Posterior cingulate gyrus (tissue), 11 donors: ENCODE measurements at regions of chr3 and their contacts with region 1.

Region 1: GRCh38 chr3:107235928-107236315 is 141.3 kb upstream of the CCDC54 start:
- DNase-seq: peak in 3 of 10 donors; percentile 40 to 61 (median 49)

Region 2: DNA sequence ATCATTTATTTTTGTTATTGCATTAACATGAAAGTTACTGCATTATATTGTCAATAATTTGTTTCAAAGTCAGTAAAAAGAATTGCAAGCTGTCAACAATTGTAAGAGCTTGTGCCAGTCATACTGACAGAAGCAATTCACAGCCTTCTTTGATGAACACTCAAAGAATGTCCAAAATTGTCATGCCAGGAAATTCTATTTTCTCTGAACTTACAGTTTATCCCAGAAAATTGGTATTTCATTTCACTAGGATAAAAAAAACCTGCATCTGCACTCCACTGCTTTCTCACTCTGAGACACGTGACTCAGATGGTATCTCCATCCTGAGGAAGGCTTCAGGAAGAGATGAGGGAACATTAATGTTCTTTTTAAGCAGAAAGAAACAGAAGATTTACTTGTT is 191.2 kb before region 1 on chr3:
- intact Hi-C with region 1: no loop called
- DNase-seq: no peak

Region 3: DNA sequence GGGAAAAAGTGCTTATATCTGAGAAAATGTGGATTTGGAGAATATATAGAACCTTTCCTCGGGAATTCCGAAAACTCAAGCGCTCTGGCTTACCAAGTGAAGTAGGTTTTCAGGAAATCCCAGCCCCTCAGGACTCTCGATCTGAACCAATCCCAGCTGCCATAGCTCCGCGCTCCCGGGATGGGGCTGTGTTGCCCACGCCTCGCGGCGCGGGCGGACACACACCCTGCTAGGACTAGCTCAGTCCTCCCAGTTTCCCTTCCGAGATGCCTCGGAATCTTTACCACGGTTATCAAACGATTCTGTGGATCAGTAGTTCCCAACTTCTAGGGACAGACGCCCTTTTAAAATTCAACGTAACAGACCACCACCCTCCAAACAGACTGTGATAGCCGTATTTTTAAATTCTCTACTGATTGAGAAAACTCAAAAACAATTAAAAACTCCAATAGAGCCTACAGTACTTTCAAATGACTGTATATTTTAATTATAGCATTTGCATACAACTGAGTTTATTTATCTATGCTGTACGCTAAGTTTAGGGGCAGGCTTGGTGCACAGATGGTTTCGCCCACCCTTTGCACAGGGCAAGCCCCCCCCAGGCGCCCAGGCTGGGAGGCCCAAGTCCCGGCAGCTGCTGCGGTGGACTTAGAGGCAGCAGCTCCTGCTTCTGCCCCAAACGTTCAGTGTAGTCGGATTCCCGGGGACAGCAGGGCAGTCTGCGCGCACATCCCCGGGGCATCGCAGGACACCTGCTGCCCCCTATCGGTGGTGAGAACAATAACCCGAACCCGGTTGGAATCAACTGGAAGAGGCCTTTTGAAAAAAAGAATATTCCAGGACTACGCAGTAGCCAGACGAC is 193.6 kb after region 1 on chr3:
- intact Hi-C with region 1: loop called (anchors 1 kb)
- DNase-seq: peak; percentile 66 to 98 (median 80)

Region 4: DNA sequence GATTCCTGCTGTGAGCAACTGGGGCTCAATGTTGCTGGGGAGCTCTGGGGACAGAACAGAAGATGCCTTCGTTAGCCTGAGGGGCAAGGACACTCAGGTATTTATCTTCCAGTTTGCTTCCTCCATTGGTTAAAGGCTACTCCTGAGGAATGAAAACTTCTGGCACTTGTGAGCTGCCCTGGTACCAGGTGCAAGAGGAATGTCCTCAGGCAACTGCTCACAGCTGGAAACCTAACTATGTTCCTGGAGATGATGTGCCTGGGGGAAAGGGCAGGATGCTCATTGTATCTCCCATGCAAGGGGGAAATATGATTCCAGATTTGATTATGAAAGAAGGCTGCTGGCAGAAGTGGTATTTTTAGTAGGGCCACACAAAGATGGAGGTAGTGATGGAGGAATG is 232.9 kb after region 1 on chr3:
- intact Hi-C with region 1: no loop called
- DNase-seq: no peak

Region 5: DNA sequence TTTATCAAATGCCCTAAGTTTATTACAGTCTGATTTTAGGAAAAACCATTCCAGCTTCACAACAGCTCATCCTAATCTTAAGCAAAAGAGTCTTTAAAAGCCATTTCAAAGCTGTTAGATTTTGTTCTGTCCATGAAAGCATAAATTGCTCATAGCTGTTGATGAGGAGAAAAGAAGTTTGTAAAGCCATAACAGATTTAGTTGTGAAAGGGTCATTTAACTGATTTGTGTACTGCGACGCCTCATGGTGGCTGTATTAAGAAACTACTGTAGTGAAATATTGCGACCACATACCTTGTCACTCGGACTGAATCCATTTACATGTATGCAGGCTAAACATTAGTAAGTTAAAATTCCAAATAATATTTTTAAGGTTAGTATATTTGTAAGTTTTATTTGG is 307.7 kb after region 1 on chr3:
- intact Hi-C with region 1: loop called (anchors 5 kb)
- DNase-seq: peak in 1 of 10 donors; percentile 33

Region 6: GRCh38 chr3:107740992-107741896 is 505.3 kb after region 1 on chr3:
- intact Hi-C with region 1: loop called (anchors 10 kb)
- DNase-seq: no peak